Activated CD8-positive, alpha-beta T cell treated with anti-CD3 and anti-CD28 coated beads for 36 hours (primary cell): ENCODE measurements at regions of chr11 and their contacts with region 1.

Region 1: DNA sequence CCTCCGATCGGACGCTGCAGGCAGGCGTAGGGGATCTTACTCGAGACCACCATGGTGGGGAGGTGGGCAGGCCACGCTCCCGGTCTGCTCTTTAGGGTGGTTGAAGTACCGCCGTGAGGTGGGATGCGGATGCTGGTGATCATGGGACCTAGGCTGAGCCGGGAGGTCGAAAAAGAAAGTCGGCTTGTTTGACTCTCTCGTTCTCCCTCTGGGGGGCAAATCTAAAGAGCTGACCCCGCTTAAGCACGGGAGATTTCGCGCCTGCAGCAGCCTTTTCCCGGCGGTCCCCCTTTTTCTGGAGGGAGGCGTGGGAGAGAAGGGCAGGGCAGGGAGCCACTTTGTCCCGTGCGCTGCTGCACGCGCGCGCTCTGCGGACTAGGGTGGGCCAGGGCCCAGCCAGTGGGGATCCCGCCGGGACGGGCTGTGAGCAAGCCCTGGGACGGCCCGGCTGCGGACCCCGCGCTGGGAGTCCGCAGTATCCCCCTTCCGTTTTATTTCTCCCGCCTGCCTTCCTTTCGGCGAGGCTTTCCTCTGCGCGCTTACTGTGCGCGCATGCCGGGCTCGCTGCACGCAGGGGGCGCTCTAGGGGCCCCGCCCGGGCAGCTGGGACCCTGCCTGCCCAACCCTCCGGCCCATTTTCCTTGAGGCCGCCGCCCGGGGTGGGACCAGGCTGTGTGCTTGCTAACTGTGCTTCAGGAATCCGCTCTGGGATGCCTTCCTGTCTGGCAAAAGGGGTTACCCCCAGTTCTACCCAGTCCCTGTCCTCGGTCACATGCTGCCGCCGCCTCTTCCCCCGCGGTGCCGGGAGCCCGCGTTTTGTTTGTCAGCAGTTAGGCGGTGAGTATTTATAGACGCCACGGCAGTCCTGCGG is 81.0 kb downstream of the PRR5L start:
- DNase-seq: peak; percentile 70
- ATAC-seq: peak; percentile 65
- H3K4me3 Mint-ChIP-seq: peak overlapping the region; percentile 88
- H3K27ac Mint-ChIP-seq: peak overlapping the region; percentile 79
- H3K4me1 Mint-ChIP-seq: peaks cover 26% of the 10 kb centered on the region
- H3K27me3 Mint-ChIP-seq: peaks cover 58% of the 10 kb centered on the region
- CTCF ChIP-seq: peak; percentile 67

Region 2: DNA sequence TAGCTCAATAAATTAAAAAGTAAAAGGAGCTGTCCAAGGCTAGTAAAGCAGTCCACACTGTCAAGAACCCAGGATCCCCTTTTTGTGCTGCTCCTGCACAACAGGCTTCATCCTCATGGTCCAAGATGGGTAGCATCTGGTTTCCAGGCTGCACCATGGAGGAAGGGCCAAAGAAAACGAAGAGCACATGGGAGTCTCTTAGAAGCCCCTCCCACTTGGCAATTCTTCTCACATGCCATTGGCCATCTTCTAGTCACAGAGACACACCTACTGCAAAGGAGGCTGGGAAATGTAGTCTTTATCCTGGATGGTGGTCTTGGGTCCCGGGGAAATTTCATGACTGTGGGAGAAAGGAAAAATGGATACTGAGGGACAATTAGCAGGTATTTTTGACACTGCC is 43.2 kb before region 1 on chr11:
- CTCF ChIA-PET with region 1: no interaction called
- POLR2A ChIA-PET with region 1: no interaction called
- intact Hi-C with region 1: no loop called
- DNase-seq: no peak
- ATAC-seq: no peak
- H3K4me3 Mint-ChIP-seq: no peak overlapping the region
- H3K27ac Mint-ChIP-seq: no peak overlapping the region
- H3K4me1 Mint-ChIP-seq: peaks cover 3% of the 10 kb centered on the region
- H3K27me3 Mint-ChIP-seq: peaks cover 7% of the 10 kb centered on the region
- CTCF ChIP-seq: no peak

Region 3: GRCh38 chr11:36363361-36364268 is 13.5 kb before region 1 on chr11:
- CTCF ChIA-PET with region 1: interaction called, 15 read pairs
- POLR2A ChIA-PET with region 1: interaction called, 4 read pairs
- intact Hi-C with region 1: no loop called
- DNase-seq: no peak
- ATAC-seq: no peak
- H3K4me3 Mint-ChIP-seq: no peak overlapping the region
- H3K27ac Mint-ChIP-seq: no peak overlapping the region
- H3K4me1 Mint-ChIP-seq: peaks cover 20% of the 10 kb centered on the region
- H3K27me3 Mint-ChIP-seq: peaks cover 34% of the 10 kb centered on the region
- CTCF ChIP-seq: no peak

Region 4: DNA sequence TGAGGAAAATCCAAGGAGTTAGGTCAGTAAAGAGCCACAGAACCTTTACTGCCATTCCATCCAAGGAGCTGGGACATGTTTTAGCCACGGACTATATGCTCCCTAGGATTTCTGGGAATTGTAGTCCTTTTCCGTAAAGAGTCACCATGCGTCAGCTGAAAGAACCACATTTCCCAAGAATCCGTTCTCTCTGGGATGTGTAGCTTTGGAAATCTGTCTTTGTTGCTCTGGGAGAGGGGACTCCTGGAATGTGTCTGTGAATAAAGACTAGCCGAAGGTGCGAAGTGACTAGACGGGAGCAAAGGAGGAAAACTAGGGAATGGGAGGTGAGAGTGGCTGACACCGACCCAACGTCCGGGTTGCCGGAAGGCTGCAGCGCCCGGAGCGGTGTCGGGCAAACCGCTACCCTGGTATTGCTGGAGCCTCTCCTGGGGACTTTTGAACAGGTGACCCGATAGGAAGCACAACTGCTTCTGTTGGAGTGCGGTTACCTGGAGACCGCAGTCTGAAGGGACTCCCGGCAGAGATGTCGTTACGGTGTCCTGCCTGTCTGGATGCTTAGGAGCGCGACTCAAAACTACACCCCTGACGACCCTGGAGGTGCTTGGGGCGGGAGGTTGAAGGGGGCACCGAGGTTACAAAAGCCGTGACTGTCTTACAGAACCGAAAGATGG is 217.3 kb after region 1 on chr11 and contains the start of gene IFTAP:
- CTCF ChIA-PET with region 1: no interaction called
- POLR2A ChIA-PET with region 1: no interaction called
- intact Hi-C with region 1: no loop called
- DNase-seq: peak; percentile 42
- ATAC-seq: peak; percentile 88
- H3K4me3 Mint-ChIP-seq: peak within 1 kb of the TSS; percentile 85
- H3K27ac Mint-ChIP-seq: no peak within 1 kb of the TSS
- H3K4me1 Mint-ChIP-seq: peaks cover 5% of the 10 kb centered on the region
- H3K27me3 Mint-ChIP-seq: peaks cover 31% of the 10 kb centered on the region
- CTCF ChIP-seq: no peak
- total RNA-seq, gene IFTAP: 2.3 to 3.6 TPM